ENCODE measurements at regions of chr3 and their contacts with region 1.

Region 1: DNA sequence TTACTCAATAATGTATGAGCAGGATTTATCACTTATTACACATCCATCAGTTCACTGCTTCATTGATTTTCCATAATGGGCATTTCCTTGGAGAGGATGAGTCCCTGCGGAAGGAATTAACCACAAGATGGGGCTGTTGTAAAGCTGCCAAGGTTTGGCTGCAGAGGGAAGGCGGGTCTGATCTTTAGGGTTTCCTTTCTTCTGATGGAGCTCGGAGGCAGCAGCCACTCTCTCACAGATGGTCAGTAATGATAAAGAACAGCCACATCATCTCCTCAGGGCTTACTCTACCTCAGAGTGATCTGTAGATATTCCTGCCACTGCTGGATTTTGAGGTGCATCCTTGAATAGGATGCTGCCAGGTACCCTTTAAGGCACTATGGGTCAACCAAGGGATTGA is 115.2 kb downstream of the USP13 start:
- DNase-seq: peak in 7 of 10 donors; percentile 24 to 52 (median 41)
- H3K4me3 ChIP-seq: no peak overlapping the region
- H3K27ac ChIP-seq: no peak overlapping the region
- H3K27me3 ChIP-seq: no peaks in the 10 kb centered on the region
- CTCF ChIP-seq: peak in 55 of 56 donors; percentile 28 to 79 (median 62)

Region 2: GRCh38 chr3:179544981-179545645 is 223.0 kb before region 1 on chr3:
- intact Hi-C with region 1: no loop called
- DNase-seq: no peak
- H3K4me3 ChIP-seq: no peak overlapping the region
- H3K27ac ChIP-seq: peak overlapping the region in 2 of 59 donors; percentile 13 to 29
- H3K27me3 ChIP-seq: no peaks in the 10 kb centered on the region
- CTCF ChIP-seq: no peak

Region 3: DNA sequence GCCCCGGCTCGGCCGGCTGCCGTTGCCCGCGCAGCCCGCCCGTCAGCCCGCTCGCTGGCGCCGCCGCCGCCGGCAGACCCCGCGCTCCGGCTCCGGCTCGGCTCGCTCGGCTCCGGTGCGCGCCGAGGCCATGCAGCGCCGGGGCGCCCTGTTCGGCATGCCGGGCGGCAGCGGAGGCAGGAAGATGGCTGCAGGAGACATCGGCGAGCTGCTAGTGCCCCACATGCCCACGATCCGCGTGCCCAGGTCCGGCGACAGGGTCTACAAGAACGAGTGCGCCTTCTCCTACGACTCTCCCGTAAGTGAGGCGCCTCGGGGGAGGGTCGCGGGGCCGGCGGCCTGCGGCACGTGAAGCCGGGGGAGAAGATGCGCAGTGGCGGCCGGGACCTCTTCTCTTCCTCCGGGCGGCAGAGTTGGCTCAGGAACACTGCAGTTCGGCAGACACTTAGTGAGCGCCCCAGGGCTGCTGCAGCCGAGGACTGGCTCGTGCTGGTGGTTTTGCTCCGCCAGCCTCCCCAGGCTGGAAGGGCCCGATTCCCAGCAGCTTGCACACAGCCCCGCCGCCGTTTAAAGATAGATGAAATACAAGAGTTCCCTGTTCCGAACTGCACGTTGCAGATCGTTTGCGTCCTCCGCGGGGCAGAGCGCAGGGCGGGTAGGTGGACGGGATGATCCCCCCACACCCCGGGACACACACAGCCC is 114.8 kb before region 1 on chr3:
- intact Hi-C with region 1: loop called in 1 of 2 experiments (anchors 5 kb)
- DNase-seq: peak; percentile 54 to 84 (median 77)
- H3K4me3 ChIP-seq: peak overlapping the region; percentile 67 to 94 (median 84)
- H3K27ac ChIP-seq: peak overlapping the region; percentile 72 to 99 (median 96)
- H3K27me3 ChIP-seq: no peaks in the 10 kb centered on the region
- CTCF ChIP-seq: peak in 25 of 56 donors; percentile 10 to 48 (median 23)

Region 4: GRCh38 chr3:180594631-180595558 is 826.8 kb after region 1 on chr3:
- intact Hi-C with region 1: loop called in 1 of 2 experiments (anchors 5 kb)
- DNase-seq: no peak
- H3K4me3 ChIP-seq: no peak overlapping the region
- H3K27ac ChIP-seq: no peak overlapping the region
- H3K27me3 ChIP-seq: no peaks in the 10 kb centered on the region
- CTCF ChIP-seq: peak in 55 of 56 donors; percentile 42 to 81 (median 64)